ENCODE measurements at regions of chr4 and their contacts with region 1.

Region 1: GRCh38 chr4:52659001-52659721 is at the start of gene USP46:
- DNase-seq: peak; percentile 60 to 64
- ATAC-seq: peak; percentile 68 to 73
- H3K4me3 ChIP-seq: peak within 1 kb of the TSS; percentile 58 to 96 (median 78)
- H3K27ac ChIP-seq: peak within 1 kb of the TSS; percentile 89 to 99 (median 91)
- H3K4me1 ChIP-seq: peaks cover 34 to 41% of the 10 kb centered on the region in 2 donors
- H3K27me3 ChIP-seq: no peaks in the 10 kb centered on the region
- CTCF ChIP-seq: no peak
- POLR2A ChIP-seq: peak; percentile 65 to 68
- total RNA-seq, gene USP46: 8.9 to 13.2 (median 11.8) TPM

Region 2: DNA sequence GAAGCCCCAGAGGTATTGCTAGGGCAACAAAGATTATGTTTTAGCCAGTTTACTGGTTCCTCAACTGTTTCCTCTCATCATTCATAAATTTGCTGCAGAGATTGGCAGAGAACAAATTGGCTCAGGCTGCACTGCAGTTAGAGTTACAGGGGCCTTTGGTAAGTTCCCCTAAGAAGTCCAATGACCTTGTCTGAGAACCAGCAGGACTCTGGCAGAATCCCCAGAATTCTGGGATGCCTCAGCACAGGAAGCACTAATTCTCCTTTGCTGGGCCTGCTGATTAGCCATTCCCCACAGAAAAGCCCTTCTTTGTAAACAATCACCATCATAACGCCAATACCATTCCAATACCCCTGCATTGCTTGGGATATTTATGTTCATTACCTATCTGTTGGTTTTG is 151.4 kb before region 1 on chr4:
- in situ Hi-C with region 1: no loop called
- intact Hi-C with region 1: no loop called
- DNase-seq: no peak
- ATAC-seq: no peak
- H3K4me3 ChIP-seq: no peak overlapping the region
- H3K27ac ChIP-seq: no peak overlapping the region
- H3K4me1 ChIP-seq: no peaks in the 10 kb centered on the region
- H3K27me3 ChIP-seq: no peaks in the 10 kb centered on the region
- CTCF ChIP-seq: no peak
- POLR2A ChIP-seq: no peak

Region 3: GRCh38 chr4:52545099-52546069 is 113.8 kb before region 1 on chr4:
- in situ Hi-C with region 1: loop called in 1 of 4 experiments (anchors 10 kb)
- intact Hi-C with region 1: loop called (anchors 2 kb)
- DNase-seq: peak; percentile 31 to 55
- ATAC-seq: peak; percentile 81 to 90
- H3K4me3 ChIP-seq: no peak overlapping the region
- H3K27ac ChIP-seq: no peak overlapping the region
- H3K4me1 ChIP-seq: peaks cover 0 to 5% of the 10 kb centered on the region in 2 donors
- H3K27me3 ChIP-seq: no peaks in the 10 kb centered on the region
- CTCF ChIP-seq: peak; percentile 73 to 94 (median 87)
- POLR2A ChIP-seq: no peak

Region 4: DNA sequence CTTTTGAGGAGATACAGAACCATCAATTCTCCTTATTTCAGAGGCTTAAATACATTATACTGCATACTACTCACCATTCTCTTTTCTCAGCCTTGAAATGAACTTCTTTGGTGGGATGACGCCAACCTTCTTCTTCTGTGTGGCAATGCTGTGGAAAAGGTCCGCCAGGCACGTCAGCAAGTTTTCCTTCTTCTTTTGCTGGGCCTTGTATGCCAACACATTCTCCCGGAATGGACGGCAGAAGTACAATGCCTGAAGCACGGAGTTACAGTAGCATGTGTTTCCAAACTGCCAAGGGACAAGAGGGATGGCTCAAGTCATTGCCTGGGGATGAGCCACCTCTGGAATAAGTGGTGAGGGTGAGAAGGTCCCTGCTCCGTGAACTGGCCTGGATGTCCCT is 31.3 kb before region 1 on chr4:
- in situ Hi-C with region 1: no loop called
- intact Hi-C with region 1: loop called (anchors 2 kb)
- DNase-seq: peak in 1 of 2 donors; percentile 15
- ATAC-seq: no peak
- H3K4me3 ChIP-seq: no peak overlapping the region
- H3K27ac ChIP-seq: peak overlapping the region in 1 of 4 donors; percentile 73
- H3K4me1 ChIP-seq: peaks cover 17 to 19% of the 10 kb centered on the region in 2 donors
- H3K27me3 ChIP-seq: no peaks in the 10 kb centered on the region
- CTCF ChIP-seq: no peak
- POLR2A ChIP-seq: no peak

Region 5: DNA sequence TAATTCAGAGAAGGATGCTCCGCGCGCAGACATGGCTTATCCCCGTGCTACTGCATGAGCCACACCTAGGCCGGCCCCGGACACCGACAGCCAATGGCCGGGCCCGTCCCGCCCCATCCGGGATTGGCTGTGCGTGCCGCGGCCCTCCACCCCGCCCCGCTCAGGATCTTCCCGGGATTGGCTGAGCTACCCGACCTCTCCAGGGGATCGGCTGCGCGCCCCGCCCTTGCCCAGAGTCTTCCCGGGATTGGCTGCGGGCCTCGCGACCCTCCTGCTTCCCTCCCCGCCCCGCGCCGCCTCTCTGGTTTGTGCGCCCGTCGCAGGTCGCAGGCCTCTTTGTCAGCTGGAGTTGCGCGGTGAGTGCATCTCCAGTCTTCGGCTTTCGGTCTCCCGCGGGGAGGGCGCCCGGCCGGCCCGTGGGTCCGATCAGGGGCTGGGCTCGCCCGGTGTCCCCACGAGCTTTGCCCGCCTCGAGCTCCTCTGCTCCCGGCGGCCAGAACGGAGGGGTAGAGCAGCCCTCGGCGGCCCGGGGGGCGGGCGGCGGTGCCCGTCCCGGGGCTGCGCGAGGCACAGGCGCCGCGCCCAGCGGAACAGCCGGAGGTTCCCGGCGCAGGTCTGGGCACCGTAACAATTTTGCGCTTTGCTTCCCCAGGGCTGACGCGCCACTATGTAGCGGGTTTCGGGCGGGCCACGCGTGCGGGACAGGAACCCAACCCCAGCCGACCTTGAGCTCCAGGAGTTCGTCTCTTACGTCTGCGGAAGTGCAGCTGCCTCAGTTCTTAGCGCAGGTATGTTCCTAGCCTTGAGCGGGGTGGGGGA is 53.2 kb after region 1 on chr4:
- in situ Hi-C with region 1: loop called in 2 of 4 experiments (anchors 10 kb)
- intact Hi-C with region 1: loop called (anchors 1 kb)
- DNase-seq: peak; percentile 97 to 99
- ATAC-seq: peak; percentile 92 to 95
- H3K4me3 ChIP-seq: peak overlapping the region; percentile 47 to 94 (median 72)
- H3K27ac ChIP-seq: peak overlapping the region; percentile 87 to 97 (median 96)
- H3K4me1 ChIP-seq: peaks cover 18 to 21% of the 10 kb centered on the region in 2 donors
- H3K27me3 ChIP-seq: no peaks in the 10 kb centered on the region
- CTCF ChIP-seq: no peak
- POLR2A ChIP-seq: peak; percentile 93 to 97

Region 6: GRCh38 chr4:52861879-52862616 is 202.9 kb after region 1 on chr4 and contains the start of gene RASL11B:
- in situ Hi-C with region 1: no loop called
- intact Hi-C with region 1: loop called (anchors 5 kb)
- DNase-seq: peak; percentile 53 to 70
- ATAC-seq: peak; percentile 96 to 98
- H3K4me3 ChIP-seq: peak within 1 kb of the TSS; percentile 63 to 80 (median 72)
- H3K27ac ChIP-seq: peak within 1 kb of the TSS; percentile 59 to 72 (median 60)
- H3K4me1 ChIP-seq: peaks cover 4 to 10% of the 10 kb centered on the region in 2 donors
- H3K27me3 ChIP-seq: no peaks in the 10 kb centered on the region
- CTCF ChIP-seq: peak in 3 of 5 experiments; percentile 31 to 64 (median 42)
- POLR2A ChIP-seq: peak; percentile 35 to 74
- total RNA-seq, gene RASL11B: 0.18 TPM in 1 of 4 donors, not detected in the others